ENCODE measurements at regions of chr2 and their contacts with region 1.

Region 1: GRCh38 chr2:231056453-231057424 is at the start of gene PSMD1:
- DNase-seq: peak; percentile 95
- ATAC-seq: peak; percentile 86
- H3K4me3 Mint-ChIP-seq: peak within 1 kb of the TSS; percentile 86
- H3K27ac Mint-ChIP-seq: peak within 1 kb of the TSS; percentile 100
- H3K4me1 Mint-ChIP-seq: peaks cover 62% of the 10 kb centered on the region
- H3K27me3 Mint-ChIP-seq: peaks cover 8% of the 10 kb centered on the region
- total RNA-seq, gene PSMD1: 89.1 to 128 TPM

Region 2: DNA sequence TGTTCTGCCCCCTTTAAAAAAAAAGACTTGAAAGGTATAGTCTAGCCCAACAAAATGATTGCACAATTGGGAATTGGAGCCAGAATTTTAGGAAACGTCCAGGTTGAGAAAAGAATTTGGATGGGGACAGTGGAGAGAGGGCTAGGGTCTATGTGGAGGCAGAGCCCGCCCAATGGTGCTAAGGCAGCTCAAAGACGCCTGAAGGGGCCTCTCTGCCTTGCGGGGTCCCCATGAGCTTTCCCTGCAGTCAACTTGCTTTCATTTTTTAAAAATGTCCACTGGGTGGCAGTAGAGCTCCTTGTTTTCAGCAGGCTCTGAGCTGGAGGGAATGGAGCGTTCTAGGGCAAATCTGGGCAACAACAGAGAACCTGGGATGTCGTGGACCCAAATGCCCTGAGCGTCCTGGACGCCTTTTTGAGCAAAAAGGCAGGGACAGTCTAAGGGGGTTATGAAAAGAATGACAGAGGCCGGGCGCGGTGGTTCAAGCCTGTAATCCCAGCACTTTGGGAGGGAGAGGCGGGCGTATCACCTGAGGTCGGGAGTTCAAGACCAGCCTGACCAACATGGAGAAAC is 232.2 kb before region 1 on chr2:
- CTCF ChIA-PET with region 1: interaction called, 20 read pairs
- DNase-seq: peak; percentile 71
- ATAC-seq: peak; percentile 82
- H3K4me3 Mint-ChIP-seq: peak overlapping the region; percentile 37
- H3K27ac Mint-ChIP-seq: peak overlapping the region; percentile 60
- H3K4me1 Mint-ChIP-seq: peaks cover 11% of the 10 kb centered on the region
- H3K27me3 Mint-ChIP-seq: peaks cover 36% of the 10 kb centered on the region

Region 3: DNA sequence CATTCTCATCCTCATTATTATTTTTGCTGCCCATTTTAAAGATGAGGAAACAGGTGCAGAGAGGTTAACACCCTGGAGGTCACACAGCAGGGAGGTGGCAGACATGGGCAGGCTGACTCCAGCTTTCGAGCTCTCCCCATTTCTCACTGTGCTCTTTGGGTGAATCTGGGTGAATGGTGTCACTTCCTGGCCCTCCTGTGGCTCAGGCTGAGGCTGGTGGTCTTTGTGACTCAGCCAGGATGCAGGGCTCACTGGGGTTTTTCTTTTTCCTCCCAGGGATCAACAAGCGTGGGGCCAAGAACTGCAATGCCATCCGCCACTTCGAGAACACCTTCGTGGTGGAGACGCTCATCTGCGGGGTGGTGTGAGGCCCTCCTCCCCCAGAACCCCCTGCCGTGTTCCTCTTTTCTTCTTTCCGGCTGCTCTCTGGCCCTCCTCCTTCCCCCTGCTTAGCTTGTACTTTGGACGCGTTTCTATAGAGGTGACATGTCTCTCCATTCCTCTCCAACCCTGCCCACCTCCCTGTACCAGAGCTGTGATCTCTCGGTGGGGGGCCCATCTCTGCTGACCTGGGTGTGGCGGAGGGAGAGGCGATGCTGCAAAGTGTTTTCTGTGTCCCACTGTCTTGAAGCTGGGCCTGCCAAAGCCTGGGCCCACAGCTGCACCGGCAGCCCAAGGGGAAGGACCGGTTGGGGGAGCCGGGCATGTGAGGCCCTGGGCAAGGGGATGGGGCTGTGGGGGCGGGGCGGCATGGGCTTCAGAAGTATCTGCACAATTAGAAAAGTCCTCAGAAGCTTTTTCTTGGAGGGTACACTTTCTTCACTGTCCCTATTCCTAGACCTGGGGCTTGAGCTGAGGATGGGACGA is 178.8 kb before region 1 on chr2:
- CTCF ChIA-PET with region 1: interaction called, 13 read pairs
- DNase-seq: peak; percentile 89
- ATAC-seq: peak; percentile 93
- H3K4me3 Mint-ChIP-seq: peak overlapping the region; percentile 54
- H3K27ac Mint-ChIP-seq: peak overlapping the region; percentile 92
- H3K4me1 Mint-ChIP-seq: peaks cover 46% of the 10 kb centered on the region
- H3K27me3 Mint-ChIP-seq: peaks cover 24% of the 10 kb centered on the region

Region 4: DNA sequence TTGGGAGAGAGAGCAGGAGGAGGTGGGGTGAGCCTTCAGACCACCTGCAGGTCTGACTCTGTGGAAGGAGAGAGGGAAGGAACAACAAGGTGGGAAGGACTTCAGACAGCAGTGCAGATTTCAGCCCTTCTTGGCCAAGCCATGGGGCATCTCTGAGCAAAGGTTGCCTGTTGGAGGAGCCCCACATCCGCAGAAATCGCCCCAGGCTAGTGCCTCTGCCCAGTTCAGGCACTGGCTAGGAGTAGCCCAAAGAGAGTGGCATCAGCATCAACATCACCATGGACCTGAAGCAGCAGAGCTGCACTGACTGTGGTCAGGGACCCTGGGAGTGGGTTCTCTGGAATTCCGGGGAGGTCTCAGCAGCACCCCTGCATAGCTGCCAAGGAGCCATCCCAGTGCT is 141.9 kb before region 1 on chr2:
- CTCF ChIA-PET with region 1: no interaction called
- DNase-seq: peak; percentile 36
- ATAC-seq: no peak
- H3K4me3 Mint-ChIP-seq: no peak overlapping the region
- H3K27ac Mint-ChIP-seq: peak overlapping the region; percentile 28
- H3K4me1 Mint-ChIP-seq: peaks cover 60% of the 10 kb centered on the region
- H3K27me3 Mint-ChIP-seq: peaks cover 12% of the 10 kb centered on the region

Region 5: GRCh38 chr2:230974096-230974913 is 82.4 kb before region 1 on chr2:
- CTCF ChIA-PET with region 1: no interaction called
- DNase-seq: peak; percentile 88
- ATAC-seq: peak; percentile 89
- H3K4me3 Mint-ChIP-seq: peak overlapping the region; percentile 39
- H3K27ac Mint-ChIP-seq: peak overlapping the region; percentile 88
- H3K4me1 Mint-ChIP-seq: peaks cover 76% of the 10 kb centered on the region
- H3K27me3 Mint-ChIP-seq: peaks cover 38% of the 10 kb centered on the region